Activated CD8-positive, alpha-beta T cell treated with anti-CD3 and anti-CD28 coated beads, Interleukin-2, amount 10 ng/mL, durations not matched to agents 7 days and 5 days (primary cell): ENCODE measurements at regions of chr14 and their contacts with region 1.

Region 1: GRCh38 chr14:75002392-75003249 is at the start of gene EIF2B2:
- DNase-seq: peak; percentile 100
- ATAC-seq: peak; percentile 98
- H3K4me3 Mint-ChIP-seq: peak within 1 kb of the TSS; percentile 91
- H3K27ac Mint-ChIP-seq: peak within 1 kb of the TSS; percentile 94
- H3K4me1 Mint-ChIP-seq: peaks cover 35% of the 10 kb centered on the region
- H3K27me3 Mint-ChIP-seq: no peaks in the 10 kb centered on the region
- total RNA-seq, gene EIF2B2: 49.1 to 51.0 TPM

Region 2: GRCh38 chr14:74981214-74981790 is 21.3 kb before region 1 on chr14:
- CTCF ChIA-PET with region 1: no interaction called
- POLR2A ChIA-PET with region 1: no interaction called
- DNase-seq: no peak
- ATAC-seq: no peak
- H3K4me3 Mint-ChIP-seq: no peak overlapping the region
- H3K27ac Mint-ChIP-seq: no peak overlapping the region
- H3K4me1 Mint-ChIP-seq: no peaks in the 10 kb centered on the region
- H3K27me3 Mint-ChIP-seq: peaks cover 4% of the 10 kb centered on the region

Region 3: DNA sequence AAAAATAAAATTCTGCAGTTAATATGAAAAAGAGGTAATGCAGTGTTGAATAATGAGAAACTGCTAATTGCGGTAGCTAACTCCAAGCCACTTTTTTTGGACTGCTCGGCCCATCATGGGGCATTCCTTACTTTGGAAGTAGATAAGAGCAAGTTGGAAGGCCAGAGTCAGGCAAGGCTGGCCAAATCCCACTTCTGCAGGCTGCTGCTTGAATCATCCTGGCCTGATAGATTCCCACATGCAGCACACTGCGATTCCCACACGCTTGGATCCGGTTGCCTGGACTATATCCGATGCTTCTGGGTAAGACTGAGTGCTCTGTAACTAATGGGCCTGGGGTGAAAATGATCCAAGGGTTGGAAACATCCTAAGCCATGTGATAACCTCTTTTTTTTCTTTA is 10.7 kb after region 1 on chr14:
- CTCF ChIA-PET with region 1: interaction called, 5 read pairs
- POLR2A ChIA-PET with region 1: interaction called, 13 read pairs
- DNase-seq: no peak
- ATAC-seq: no peak
- H3K4me3 Mint-ChIP-seq: no peak overlapping the region
- H3K27ac Mint-ChIP-seq: no peak overlapping the region
- H3K4me1 Mint-ChIP-seq: peaks cover 23% of the 10 kb centered on the region
- H3K27me3 Mint-ChIP-seq: no peaks in the 10 kb centered on the region

Region 4: DNA sequence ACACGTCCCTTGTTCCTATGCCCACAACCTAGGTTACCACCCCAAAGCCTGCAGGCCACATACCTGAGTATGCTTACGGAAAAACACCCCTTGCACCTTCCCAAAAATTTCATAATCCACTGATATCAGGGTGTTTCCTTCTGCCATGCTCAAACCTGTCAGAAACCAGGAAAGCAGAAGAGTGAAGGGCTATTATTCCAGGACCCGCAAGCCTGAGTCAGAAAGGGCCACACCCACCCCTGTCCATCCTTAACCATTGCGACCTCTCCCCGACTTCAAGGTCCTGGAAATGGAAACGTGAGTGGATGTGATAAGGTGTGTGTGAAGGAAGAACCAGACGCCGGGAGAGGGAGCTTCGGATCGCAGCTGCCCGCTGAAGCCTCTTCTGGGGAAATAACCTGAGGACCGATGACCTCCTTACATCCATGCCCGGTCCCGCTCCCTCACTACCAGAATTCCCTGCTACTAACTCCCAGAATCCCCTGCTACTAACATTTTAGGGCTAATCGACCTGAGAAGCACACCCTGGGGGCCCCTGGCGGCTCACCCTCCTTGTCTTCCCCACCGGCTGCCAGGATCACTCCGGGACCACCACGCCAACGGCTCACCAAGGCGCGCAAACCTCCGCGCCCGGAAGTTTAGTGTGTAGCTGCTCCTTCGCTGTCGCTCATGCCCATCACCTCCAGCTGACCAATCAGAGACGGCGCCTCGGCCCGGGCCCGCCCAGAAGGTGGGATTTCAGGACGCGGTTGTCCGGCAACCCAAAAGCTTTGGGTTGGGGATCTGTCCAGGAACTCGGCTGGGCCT is 61.0 kb after region 1 on chr14 and contains the start of gene ACYP1:
- CTCF ChIA-PET with region 1: no interaction called
- POLR2A ChIA-PET with region 1: interaction called, 14 read pairs
- DNase-seq: peak; percentile 94
- ATAC-seq: peak; percentile 100
- H3K4me3 Mint-ChIP-seq: peak within 1 kb of the TSS; percentile 100
- H3K27ac Mint-ChIP-seq: peak within 1 kb of the TSS; percentile 99
- H3K4me1 Mint-ChIP-seq: peaks cover 38% of the 10 kb centered on the region
- H3K27me3 Mint-ChIP-seq: no peaks in the 10 kb centered on the region
- total RNA-seq, gene ACYP1: 42.6 to 44.0 TPM